ENCODE measurements at regions of chr3 and their contacts with region 1.

Region 1: GRCh38 chr3:157130467-157131251 is 29.3 kb downstream of the CCNL1 start:
- DNase-seq: peak; percentile 80
- H3K4me3 Mint-ChIP-seq: peak overlapping the region; percentile 60
- H3K27ac Mint-ChIP-seq: peak overlapping the region; percentile 96
- H3K4me1 Mint-ChIP-seq: peaks cover 63% of the 10 kb centered on the region
- H3K27me3 Mint-ChIP-seq: no peaks in the 10 kb centered on the region
- CTCF ChIP-seq: peak; percentile 81

Region 2: DNA sequence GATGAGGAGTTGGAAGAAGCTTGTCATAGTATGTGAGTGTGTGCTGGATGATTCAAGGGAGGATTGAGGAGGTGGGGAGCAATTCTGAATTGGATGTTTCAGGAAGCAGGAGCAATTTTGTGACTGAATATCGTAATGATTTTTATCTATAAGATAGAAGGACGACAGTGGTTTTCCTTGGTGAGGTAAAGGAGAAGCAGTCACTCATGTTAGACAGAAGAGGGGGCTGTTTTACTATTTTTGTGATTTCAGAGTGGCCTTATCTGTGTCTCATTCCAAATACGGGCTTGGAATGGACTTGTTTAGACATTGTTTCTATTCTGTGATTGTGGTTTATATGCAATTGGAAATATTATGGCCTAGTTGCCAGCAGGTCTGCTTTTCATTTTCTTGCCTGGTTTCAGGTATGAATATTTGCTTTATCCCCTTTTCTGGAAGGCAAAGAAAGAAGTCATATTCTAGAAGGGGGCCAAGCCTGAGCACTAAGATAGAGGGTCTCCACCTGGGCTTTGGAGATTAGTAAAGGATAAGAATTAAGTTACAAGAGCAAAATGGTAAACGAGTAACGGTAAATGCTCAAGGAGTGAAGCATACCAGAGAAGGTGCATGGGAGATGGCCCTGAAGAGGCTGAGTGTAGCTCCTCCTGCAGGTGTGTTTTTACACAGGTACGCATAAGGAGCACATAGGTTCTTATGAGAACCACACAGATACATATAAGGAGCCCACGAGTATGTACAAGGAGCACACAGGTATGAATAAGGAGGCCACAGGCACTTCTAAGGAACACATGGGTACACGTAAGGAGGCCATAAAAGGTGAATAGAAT is 1134.9 kb before region 1 on chr3:
- CTCF ChIA-PET with region 1: no interaction called
- POLR2A ChIA-PET with region 1: no interaction called
- intact Hi-C with region 1: loop called (anchors 10 kb)
- DNase-seq: peak; percentile 59
- H3K4me3 Mint-ChIP-seq: no peak overlapping the region
- H3K27ac Mint-ChIP-seq: no peak overlapping the region
- H3K4me1 Mint-ChIP-seq: no peaks in the 10 kb centered on the region
- H3K27me3 Mint-ChIP-seq: peaks cover 7% of the 10 kb centered on the region
- CTCF ChIP-seq: peak; percentile 40

Region 3: DNA sequence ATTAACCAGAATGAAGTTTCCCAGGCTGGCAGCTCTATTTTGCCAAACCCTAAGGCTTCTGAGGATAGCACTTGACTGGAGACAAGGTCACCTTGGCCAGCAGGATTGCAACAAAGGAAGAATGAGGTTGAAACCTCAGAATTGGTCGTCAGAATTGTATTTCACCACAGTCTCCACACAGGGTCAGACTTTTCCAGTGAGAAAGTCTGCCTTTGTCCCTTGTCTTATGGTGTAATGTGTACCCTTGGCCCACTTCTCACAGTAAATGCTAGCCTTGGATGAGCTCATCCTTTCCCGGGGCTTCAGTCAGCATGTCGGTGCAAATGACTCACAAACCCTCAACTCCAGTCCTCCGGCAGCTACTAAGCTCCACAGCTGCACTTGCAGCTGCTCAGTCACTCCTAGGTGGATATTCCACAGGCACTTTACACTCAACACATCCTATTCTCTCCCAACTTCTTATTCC is 595.5 kb before region 1 on chr3:
- CTCF ChIA-PET with region 1: interaction called, 5 read pairs
- POLR2A ChIA-PET with region 1: no interaction called
- intact Hi-C with region 1: loop called (anchors 5 kb)
- DNase-seq: peak; percentile 91
- H3K4me3 Mint-ChIP-seq: no peak overlapping the region
- H3K27ac Mint-ChIP-seq: peak overlapping the region; percentile 1
- H3K4me1 Mint-ChIP-seq: peaks cover 7% of the 10 kb centered on the region
- H3K27me3 Mint-ChIP-seq: no peaks in the 10 kb centered on the region
- CTCF ChIP-seq: no peak

Region 4: GRCh38 chr3:157099326-157100095 is 31.1 kb before region 1 on chr3:
- CTCF ChIA-PET with region 1: interaction called, 25 read pairs
- POLR2A ChIA-PET with region 1: interaction called, 331 read pairs
- intact Hi-C with region 1: no loop called
- DNase-seq: peak; percentile 71
- H3K4me3 Mint-ChIP-seq: no peak overlapping the region
- H3K27ac Mint-ChIP-seq: peak overlapping the region; percentile 78
- H3K4me1 Mint-ChIP-seq: peaks cover 22% of the 10 kb centered on the region
- H3K27me3 Mint-ChIP-seq: no peaks in the 10 kb centered on the region
- CTCF ChIP-seq: no peak

Region 5: DNA sequence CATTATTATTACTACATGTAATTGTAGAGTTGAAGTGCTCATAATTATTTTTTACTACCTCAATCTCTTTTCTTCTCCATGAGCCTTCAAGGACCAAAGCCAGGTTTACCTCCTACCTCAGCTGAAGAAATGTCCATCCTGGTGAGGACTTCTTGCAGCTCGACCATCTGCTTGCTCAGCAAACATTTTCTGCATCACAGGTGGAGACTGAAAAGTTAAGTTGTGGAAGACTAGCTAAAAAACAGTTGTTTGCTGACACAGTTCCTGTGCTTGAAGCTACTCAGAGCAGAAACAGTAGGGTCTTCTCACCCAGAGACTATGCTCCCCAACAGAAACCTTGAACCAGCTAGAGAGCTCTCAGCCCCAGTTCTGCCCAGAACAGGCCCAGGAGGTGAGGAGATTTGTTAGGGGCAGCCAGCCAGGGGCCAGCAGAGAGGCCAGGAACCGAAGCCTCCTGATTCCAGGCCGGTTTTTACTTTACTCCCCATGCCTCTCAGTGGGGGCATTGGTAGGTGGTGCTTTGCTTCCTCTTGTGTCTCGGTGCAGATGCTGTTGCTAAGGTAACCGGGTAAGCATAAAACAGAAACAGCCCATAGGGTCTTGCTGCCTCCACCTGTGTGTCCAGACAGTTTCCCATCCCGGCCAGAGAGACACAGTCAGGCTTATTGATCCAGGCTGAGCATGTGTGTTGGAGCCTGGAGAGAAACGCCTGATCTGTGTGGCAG is 25.6 kb before region 1 on chr3:
- CTCF ChIA-PET with region 1: interaction called, 25 read pairs
- POLR2A ChIA-PET with region 1: interaction called, 123 read pairs
- intact Hi-C with region 1: no loop called
- DNase-seq: no peak
- H3K4me3 Mint-ChIP-seq: no peak overlapping the region
- H3K27ac Mint-ChIP-seq: peak overlapping the region; percentile 10
- H3K4me1 Mint-ChIP-seq: peaks cover 18% of the 10 kb centered on the region
- H3K27me3 Mint-ChIP-seq: no peaks in the 10 kb centered on the region
- CTCF ChIP-seq: no peak

Region 6: DNA sequence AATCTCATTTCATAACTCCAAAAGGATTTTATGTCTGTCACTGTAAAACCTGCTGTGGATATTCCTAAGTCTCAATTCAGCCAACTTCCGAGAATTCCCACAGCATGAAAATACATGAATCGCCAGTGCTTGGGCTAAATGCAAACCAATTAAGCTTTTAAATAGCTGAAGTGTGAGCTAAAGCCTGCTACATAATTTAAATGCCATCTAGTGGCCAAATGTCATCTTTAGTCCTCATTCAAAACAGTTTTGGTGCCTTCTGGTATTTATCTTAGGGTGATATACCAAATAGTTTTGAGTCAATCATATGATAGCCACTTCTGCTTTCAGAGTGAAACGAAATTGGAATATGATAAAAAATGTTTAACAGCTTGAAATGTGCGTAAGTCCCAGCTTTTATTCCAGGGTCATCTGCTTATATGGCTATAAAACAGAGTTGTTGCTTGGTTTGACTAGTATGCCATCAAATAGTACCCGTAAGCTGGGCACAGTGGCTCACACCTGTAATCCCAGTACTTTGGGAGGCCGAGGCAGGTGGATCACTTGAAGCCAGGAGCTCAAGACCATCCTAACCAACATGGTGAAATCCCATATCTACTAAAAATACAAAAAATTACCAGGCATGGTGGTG is 71.1 kb after region 1 on chr3:
- CTCF ChIA-PET with region 1: no interaction called
- POLR2A ChIA-PET with region 1: no interaction called
- intact Hi-C with region 1: no loop called
- DNase-seq: peak; percentile 52
- H3K4me3 Mint-ChIP-seq: no peak overlapping the region
- H3K27ac Mint-ChIP-seq: no peak overlapping the region
- H3K4me1 Mint-ChIP-seq: no peaks in the 10 kb centered on the region
- H3K27me3 Mint-ChIP-seq: no peaks in the 10 kb centered on the region
- CTCF ChIP-seq: peak; percentile 45